A673 (cell line): ENCODE measurements at regions of chr10 and their contacts with region 1.

Region 1: GRCh38 chr10:16828114-16828568 is 10.9 kb upstream of the RSU1 start:
- DNase-seq: peak; percentile 95
- H3K4me3 ChIP-seq: peak overlapping the region; percentile 1
- H3K27ac ChIP-seq: no peak overlapping the region
- H3K4me1 ChIP-seq: peaks cover 19% of the 10 kb centered on the region
- H3K27me3 ChIP-seq: no peaks in the 10 kb centered on the region
- CTCF ChIP-seq: peak; percentile 69

Region 2: DNA sequence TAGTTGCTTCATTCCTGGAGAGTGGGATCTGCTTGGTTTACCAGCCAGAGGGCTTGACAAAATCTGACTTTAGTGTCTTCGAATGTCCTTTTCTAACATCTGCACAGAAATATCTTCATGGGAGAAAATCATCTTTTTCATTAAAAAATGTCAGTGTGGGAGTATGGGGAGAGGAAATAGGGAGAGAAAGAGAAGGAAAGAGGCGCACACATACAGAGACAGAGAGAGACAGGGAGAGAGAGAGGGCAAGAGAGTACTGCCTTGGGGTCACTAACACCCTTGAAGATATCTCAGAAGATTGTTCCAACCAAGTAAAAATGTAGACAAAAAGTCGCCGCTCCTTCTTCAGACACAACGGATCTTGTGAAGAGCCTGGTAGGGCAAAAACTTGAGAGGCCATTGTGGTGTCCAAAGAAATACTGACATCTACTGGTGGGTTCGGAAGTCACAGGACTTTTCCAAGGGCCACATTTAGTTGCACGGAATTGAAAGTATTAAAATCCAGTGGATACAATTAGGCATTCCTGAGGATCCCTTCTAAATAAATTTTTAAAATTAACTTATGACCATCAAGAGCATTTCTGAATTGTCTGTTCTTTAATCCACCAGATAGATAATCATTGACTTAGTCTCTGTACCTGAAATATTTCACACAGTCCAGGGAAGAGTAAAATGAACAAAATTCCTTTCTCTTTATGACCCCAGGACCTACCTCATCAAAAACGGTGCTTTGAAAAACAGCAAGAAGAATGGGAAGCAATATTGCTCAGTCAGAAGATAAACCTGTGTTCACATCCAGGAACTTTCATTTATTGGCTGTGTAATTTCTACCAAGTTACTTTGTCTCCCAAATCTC is 429.6 kb after region 1 on chr10:
- CTCF ChIA-PET with region 1: no interaction called
- POLR2A ChIA-PET with region 1: no interaction called
- intact Hi-C with region 1: loop called (anchors 2 kb)
- DNase-seq: peak; percentile 86
- H3K4me3 ChIP-seq: no peak overlapping the region
- H3K27ac ChIP-seq: no peak overlapping the region
- H3K4me1 ChIP-seq: peaks cover 12% of the 10 kb centered on the region
- H3K27me3 ChIP-seq: no peaks in the 10 kb centered on the region
- CTCF ChIP-seq: peak; percentile 90

Region 3: GRCh38 chr10:17430647-17431355 is 602.7 kb after region 1 on chr10:
- CTCF ChIA-PET with region 1: no interaction called
- POLR2A ChIA-PET with region 1: no interaction called
- intact Hi-C with region 1: loop called (anchors 5 kb)
- DNase-seq: peak; percentile 78
- H3K4me3 ChIP-seq: no peak overlapping the region
- H3K27ac ChIP-seq: no peak overlapping the region
- H3K4me1 ChIP-seq: no peaks in the 10 kb centered on the region
- H3K27me3 ChIP-seq: peaks cover 26% of the 10 kb centered on the region
- CTCF ChIP-seq: peak; percentile 91

Region 4: DNA sequence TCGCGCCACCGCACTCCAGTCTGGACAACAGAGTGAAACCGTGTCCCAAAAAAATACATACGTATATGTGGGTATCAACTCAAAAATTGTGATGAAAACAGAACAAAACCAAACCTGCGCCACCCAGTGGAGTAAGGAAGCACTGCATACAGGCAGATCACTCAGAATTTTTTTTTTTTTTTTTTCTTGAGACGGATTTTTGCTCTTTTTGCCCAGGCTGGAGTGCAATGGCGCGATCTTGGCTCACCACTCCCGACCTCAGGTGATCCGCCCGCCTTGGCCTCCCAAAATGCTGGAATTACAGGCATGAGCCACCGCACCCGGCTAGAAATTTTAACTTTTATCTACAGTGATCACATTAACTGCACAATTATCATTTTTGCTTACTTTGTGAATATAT is 914.8 kb after region 1 on chr10:
- CTCF ChIA-PET with region 1: no interaction called
- POLR2A ChIA-PET with region 1: no interaction called
- intact Hi-C with region 1: loop called (anchors 10 kb)
- DNase-seq: peak; percentile 79
- H3K4me3 ChIP-seq: no peak overlapping the region
- H3K27ac ChIP-seq: no peak overlapping the region
- H3K4me1 ChIP-seq: peaks cover 4% of the 10 kb centered on the region
- H3K27me3 ChIP-seq: no peaks in the 10 kb centered on the region
- CTCF ChIP-seq: peak; percentile 81